CD4-positive, alpha-beta T cell (primary cell): ENCODE measurements at regions of chr1 and their contacts with region 1.

Region 1: GRCh38 chr1:12434174-12434573 is 183.8 kb downstream of the DHRS3 start:
- DNase-seq: peak in 12 of 14 experiments; percentile 11 to 82 (median 45)
- ATAC-seq: peak; percentile 78
- H3K4me3 ChIP-seq: no peak overlapping the region
- H3K4me3 Mint-ChIP-seq: peak overlapping the region; percentile 62
- H3K27ac ChIP-seq: peak overlapping the region; percentile 17 to 43
- H3K27ac Mint-ChIP-seq: peak overlapping the region; percentile 84
- H3K4me1 ChIP-seq: peaks cover 55% of the 10 kb centered on the region
- H3K4me1 Mint-ChIP-seq: peaks cover 61% of the 10 kb centered on the region
- H3K27me3 ChIP-seq: no peaks in the 10 kb centered on the region
- H3K27me3 Mint-ChIP-seq: no peaks in the 10 kb centered on the region
- CTCF ChIP-seq: no peak

Region 2: GRCh38 chr1:12448746-12449177 is 14.6 kb after region 1 on chr1:
- CTCF ChIA-PET with region 1: interaction called, 3 read pairs
- POLR2A ChIA-PET with region 1: interaction called, 25 read pairs
- intact Hi-C with region 1: loop called in 1 of 2 experiments (anchors 2 kb)
- DNase-seq: peak in 1 of 14 experiments; percentile 13
- ATAC-seq: no peak
- H3K4me3 ChIP-seq: peak overlapping the region; percentile 19
- H3K4me3 Mint-ChIP-seq: no peak overlapping the region
- H3K27ac ChIP-seq: peak overlapping the region; percentile 33 to 64
- H3K27ac Mint-ChIP-seq: peak overlapping the region; percentile 85
- H3K4me1 ChIP-seq: peaks cover 59% of the 10 kb centered on the region
- H3K4me1 Mint-ChIP-seq: peaks cover 89% of the 10 kb centered on the region
- H3K27me3 ChIP-seq: no peaks in the 10 kb centered on the region
- H3K27me3 Mint-ChIP-seq: no peaks in the 10 kb centered on the region
- CTCF ChIP-seq: no peak